CD4-positive, alpha-beta T cell (primary cell): ENCODE measurements at regions of chr1 and their contacts with region 1.

Region 1: DNA sequence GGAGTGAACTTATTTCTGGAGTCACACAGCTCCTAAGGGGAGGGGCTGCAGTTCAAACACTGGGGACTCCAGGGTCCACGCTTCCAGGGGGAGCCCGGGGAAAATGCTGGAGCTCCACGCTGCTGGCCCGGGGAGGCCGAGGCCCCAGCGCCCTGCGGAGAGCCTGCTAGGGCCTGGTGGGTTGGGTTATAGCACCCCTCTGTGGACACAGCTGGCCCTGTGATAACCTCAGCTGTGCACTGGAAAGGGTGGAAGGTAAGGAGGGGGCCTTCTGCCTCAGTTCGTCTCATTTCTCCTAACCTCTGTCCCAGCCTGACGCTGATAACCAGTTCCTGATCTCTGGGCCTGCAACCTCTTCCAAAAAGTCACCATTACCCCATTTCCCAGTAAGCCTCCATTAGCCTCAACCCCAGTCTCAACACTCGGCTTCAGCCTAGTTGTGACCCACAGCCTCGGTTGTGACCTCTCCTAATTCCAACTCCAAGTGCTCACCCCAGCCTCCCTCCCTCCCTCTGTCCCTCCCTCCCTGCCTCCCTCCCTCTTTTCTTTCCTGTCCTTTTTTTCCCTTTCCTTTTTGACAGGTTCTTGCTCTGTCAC is 7.1 kb downstream of the NBL1 start:
- DNase-seq: peak in 11 of 14 experiments; percentile 24 to 77 (median 53)
- ATAC-seq: peak; percentile 64
- H3K4me3 ChIP-seq: no peak overlapping the region
- H3K4me3 Mint-ChIP-seq: no peak overlapping the region
- H3K27ac ChIP-seq: no peak overlapping the region
- H3K27ac Mint-ChIP-seq: no peak overlapping the region
- H3K4me1 ChIP-seq: peaks cover 38% of the 10 kb centered on the region
- H3K4me1 Mint-ChIP-seq: peaks cover 25% of the 10 kb centered on the region
- H3K27me3 ChIP-seq: no peaks in the 10 kb centered on the region
- H3K27me3 Mint-ChIP-seq: peaks cover 4% of the 10 kb centered on the region
- CTCF ChIP-seq: peak; percentile 57

Region 2: GRCh38 chr1:19179597-19180264 is 471.5 kb before region 1 on chr1:
- CTCF ChIA-PET with region 1: no interaction called
- POLR2A ChIA-PET with region 1: no interaction called
- intact Hi-C with region 1: loop called in 1 of 2 experiments (anchors 10 kb)
- DNase-seq: peak in 9 of 14 experiments; percentile 7 to 66 (median 28)
- ATAC-seq: peak; percentile 90
- H3K4me3 ChIP-seq: no peak overlapping the region
- H3K4me3 Mint-ChIP-seq: peak overlapping the region; percentile 38
- H3K27ac ChIP-seq: peak overlapping the region; percentile 7 to 35
- H3K27ac Mint-ChIP-seq: peak overlapping the region; percentile 61
- H3K4me1 ChIP-seq: peaks cover 15% of the 10 kb centered on the region
- H3K4me1 Mint-ChIP-seq: peaks cover 36% of the 10 kb centered on the region
- H3K27me3 ChIP-seq: no peaks in the 10 kb centered on the region
- H3K27me3 Mint-ChIP-seq: no peaks in the 10 kb centered on the region
- CTCF ChIP-seq: peak; percentile 30

Region 3: DNA sequence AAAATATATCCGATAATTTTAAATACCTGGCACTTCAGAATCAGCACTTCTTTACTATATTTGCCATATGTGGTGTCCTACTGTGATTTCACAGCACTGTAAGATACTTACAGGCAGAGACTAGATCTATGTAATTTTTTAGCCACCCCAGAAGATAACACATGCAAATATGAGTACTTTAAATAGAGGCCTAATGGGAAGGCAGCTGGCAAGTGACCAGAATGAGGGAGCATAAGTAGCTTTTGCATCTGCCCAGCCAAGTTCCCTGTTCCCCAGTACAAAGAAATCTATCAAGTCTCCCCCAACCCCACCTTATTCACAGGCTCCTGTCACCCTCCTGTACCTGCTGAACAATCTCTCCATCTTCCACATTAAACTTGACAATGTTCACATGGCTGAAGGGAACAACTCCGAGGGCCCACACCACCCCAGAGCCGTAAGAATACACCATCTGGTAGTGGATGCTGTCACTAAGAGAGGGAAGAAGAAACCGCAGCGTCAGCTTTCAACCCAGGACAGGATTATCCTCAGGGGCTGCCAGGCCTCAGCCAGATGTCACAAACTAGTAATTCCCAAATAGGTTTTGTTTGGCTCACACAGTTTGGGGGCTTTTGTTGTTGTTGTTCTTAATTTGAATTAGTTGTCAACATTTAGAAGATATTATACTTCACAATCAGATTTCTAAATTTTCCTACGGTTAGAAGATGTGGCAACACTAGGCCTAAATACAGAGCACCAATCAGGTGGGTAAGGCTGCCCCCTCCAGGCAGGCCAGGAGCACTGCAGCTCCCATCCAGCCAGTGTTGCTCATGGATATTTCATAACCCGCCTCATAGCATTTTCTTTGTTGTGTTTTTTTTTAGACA is 410.3 kb before region 1 on chr1:
- CTCF ChIA-PET with region 1: no interaction called
- POLR2A ChIA-PET with region 1: no interaction called
- intact Hi-C with region 1: loop called in 1 of 2 experiments (anchors 5 kb)
- DNase-seq: peak; percentile 48 to 81 (median 64)
- ATAC-seq: peak; percentile 100
- H3K4me3 ChIP-seq: no peak overlapping the region
- H3K4me3 Mint-ChIP-seq: no peak overlapping the region
- H3K27ac ChIP-seq: no peak overlapping the region
- H3K27ac Mint-ChIP-seq: no peak overlapping the region
- H3K4me1 ChIP-seq: no peaks in the 10 kb centered on the region
- H3K4me1 Mint-ChIP-seq: no peaks in the 10 kb centered on the region
- H3K27me3 ChIP-seq: no peaks in the 10 kb centered on the region
- H3K27me3 Mint-ChIP-seq: no peaks in the 10 kb centered on the region
- CTCF ChIP-seq: peak; percentile 97

Region 4: GRCh38 chr1:19341201-19342072 is 309.8 kb before region 1 on chr1:
- CTCF ChIA-PET with region 1: interaction called, 3 read pairs
- POLR2A ChIA-PET with region 1: no interaction called
- intact Hi-C with region 1: loop called (anchors 1 kb)
- DNase-seq: peak; percentile 58 to 85 (median 71)
- ATAC-seq: peak; percentile 89
- H3K4me3 ChIP-seq: no peak overlapping the region
- H3K4me3 Mint-ChIP-seq: no peak overlapping the region
- H3K27ac ChIP-seq: no peak overlapping the region
- H3K27ac Mint-ChIP-seq: peak overlapping the region; percentile 37
- H3K4me1 ChIP-seq: peaks cover 8% of the 10 kb centered on the region
- H3K4me1 Mint-ChIP-seq: peaks cover 6% of the 10 kb centered on the region
- H3K27me3 ChIP-seq: no peaks in the 10 kb centered on the region
- H3K27me3 Mint-ChIP-seq: no peaks in the 10 kb centered on the region
- CTCF ChIP-seq: peak; percentile 87

Region 5: GRCh38 chr1:19390901-19391595 is 260.2 kb before region 1 on chr1:
- CTCF ChIA-PET with region 1: interaction called, 10 read pairs
- POLR2A ChIA-PET with region 1: interaction called, 5 read pairs
- intact Hi-C with region 1: loop called (anchors 1 to 2 kb)
- DNase-seq: peak; percentile 31 to 91 (median 62)
- ATAC-seq: peak; percentile 76
- H3K4me3 ChIP-seq: peak overlapping the region; percentile 51
- H3K4me3 Mint-ChIP-seq: peak overlapping the region; percentile 92
- H3K27ac ChIP-seq: peak overlapping the region; percentile 46 to 62
- H3K27ac Mint-ChIP-seq: peak overlapping the region; percentile 94
- H3K4me1 ChIP-seq: peaks cover 92% of the 10 kb centered on the region
- H3K4me1 Mint-ChIP-seq: peaks cover 86% of the 10 kb centered on the region
- H3K27me3 ChIP-seq: no peaks in the 10 kb centered on the region
- H3K27me3 Mint-ChIP-seq: no peaks in the 10 kb centered on the region
- CTCF ChIP-seq: peak; percentile 90

Region 6: DNA sequence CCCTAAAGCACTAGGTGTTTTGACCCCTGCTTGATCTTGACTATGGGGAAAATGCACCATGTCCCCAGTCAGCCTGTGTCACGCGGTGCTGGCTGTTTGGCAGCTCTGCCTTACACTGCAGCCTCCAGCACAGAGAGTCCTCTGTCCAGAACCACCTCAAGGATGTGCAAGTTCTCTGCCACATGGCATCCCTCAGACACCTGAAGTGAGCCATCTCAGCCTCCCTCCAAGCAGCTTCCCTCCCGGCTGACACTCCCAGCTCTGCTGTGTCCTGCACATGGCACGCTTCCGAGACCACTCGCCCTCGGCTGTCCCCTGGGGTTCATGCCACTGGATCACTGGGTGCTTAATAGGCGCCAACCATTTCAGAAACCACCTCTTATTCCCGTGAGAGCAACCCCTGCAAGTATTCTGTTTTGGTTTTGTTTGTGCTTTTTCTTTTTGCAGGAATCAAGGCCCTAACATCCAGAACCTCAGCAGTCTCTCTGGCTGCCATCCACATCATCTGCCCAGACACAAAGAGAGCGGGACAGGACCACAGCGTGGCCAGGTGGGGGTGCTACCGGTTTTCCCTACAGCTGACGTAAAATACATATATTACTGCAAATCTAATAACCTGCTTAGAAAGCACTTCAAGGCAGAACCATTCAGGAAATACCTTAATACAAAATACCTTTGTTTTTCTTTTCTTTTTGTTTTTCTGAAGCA is 211.6 kb before region 1 on chr1:
- CTCF ChIA-PET with region 1: interaction called, 7 read pairs
- POLR2A ChIA-PET with region 1: no interaction called
- intact Hi-C with region 1: loop called (anchors 1 to 5 kb)
- DNase-seq: peak; percentile 21 to 71 (median 47)
- ATAC-seq: peak; percentile 72
- H3K4me3 ChIP-seq: no peak overlapping the region
- H3K4me3 Mint-ChIP-seq: peak overlapping the region; percentile 52
- H3K27ac ChIP-seq: peak overlapping the region in 1 of 2 donors; percentile 26
- H3K27ac Mint-ChIP-seq: peak overlapping the region; percentile 76
- H3K4me1 ChIP-seq: peaks cover 87% of the 10 kb centered on the region
- H3K4me1 Mint-ChIP-seq: peaks cover 94% of the 10 kb centered on the region
- H3K27me3 ChIP-seq: no peaks in the 10 kb centered on the region
- H3K27me3 Mint-ChIP-seq: no peaks in the 10 kb centered on the region
- CTCF ChIP-seq: peak; percentile 54

Region 7: GRCh38 chr1:19582302-19582701 is 68.9 kb before region 1 on chr1:
- CTCF ChIA-PET with region 1: interaction called, 10 read pairs
- POLR2A ChIA-PET with region 1: no interaction called
- intact Hi-C with region 1: loop called (anchors 2 kb)
- DNase-seq: peak; percentile 59 to 88 (median 76)
- ATAC-seq: peak; percentile 77
- H3K4me3 ChIP-seq: no peak overlapping the region
- H3K4me3 Mint-ChIP-seq: no peak overlapping the region
- H3K27ac ChIP-seq: no peak overlapping the region
- H3K27ac Mint-ChIP-seq: no peak overlapping the region
- H3K4me1 ChIP-seq: peaks cover 11% of the 10 kb centered on the region
- H3K4me1 Mint-ChIP-seq: peaks cover 9% of the 10 kb centered on the region
- H3K27me3 ChIP-seq: no peaks in the 10 kb centered on the region
- H3K27me3 Mint-ChIP-seq: peaks cover 4% of the 10 kb centered on the region
- CTCF ChIP-seq: peak; percentile 91

Region 8: GRCh38 chr1:19629357-19629756 is 21.9 kb before region 1 on chr1:
- CTCF ChIA-PET with region 1: no interaction called
- POLR2A ChIA-PET with region 1: no interaction called
- intact Hi-C with region 1: no loop called
- DNase-seq: no peak
- ATAC-seq: no peak
- H3K4me3 ChIP-seq: no peak overlapping the region
- H3K4me3 Mint-ChIP-seq: no peak overlapping the region
- H3K27ac ChIP-seq: no peak overlapping the region
- H3K27ac Mint-ChIP-seq: no peak overlapping the region
- H3K4me1 ChIP-seq: no peaks in the 10 kb centered on the region
- H3K4me1 Mint-ChIP-seq: no peaks in the 10 kb centered on the region
- H3K27me3 ChIP-seq: no peaks in the 10 kb centered on the region
- H3K27me3 Mint-ChIP-seq: no peaks in the 10 kb centered on the region
- CTCF ChIP-seq: no peak

Region 9: GRCh38 chr1:19882111-19883071 is 231.2 kb after region 1 on chr1 and contains the start of gene OTUD3:
- CTCF ChIA-PET with region 1: no interaction called
- POLR2A ChIA-PET with region 1: no interaction called
- intact Hi-C with region 1: no loop called
- DNase-seq: peak; percentile 89 to 99 (median 94)
- ATAC-seq: peak; percentile 98
- H3K4me3 ChIP-seq: peak within 1 kb of the TSS; percentile 84
- H3K4me3 Mint-ChIP-seq: peak within 1 kb of the TSS; percentile 91
- H3K27ac ChIP-seq: peak within 1 kb of the TSS in 1 of 2 donors; percentile 55
- H3K27ac Mint-ChIP-seq: peak within 1 kb of the TSS; percentile 65
- H3K4me1 ChIP-seq: peaks cover 19% of the 10 kb centered on the region
- H3K4me1 Mint-ChIP-seq: peaks cover 47% of the 10 kb centered on the region
- H3K27me3 ChIP-seq: no peaks in the 10 kb centered on the region
- H3K27me3 Mint-ChIP-seq: peaks cover 8% of the 10 kb centered on the region
- CTCF ChIP-seq: peak; percentile 90
- total RNA-seq, gene OTUD3: 11.4 to 12.6 TPM